MCF 10A (cell line): ENCODE measurements at regions of chr3 and their contacts with region 1.

Region 1: DNA sequence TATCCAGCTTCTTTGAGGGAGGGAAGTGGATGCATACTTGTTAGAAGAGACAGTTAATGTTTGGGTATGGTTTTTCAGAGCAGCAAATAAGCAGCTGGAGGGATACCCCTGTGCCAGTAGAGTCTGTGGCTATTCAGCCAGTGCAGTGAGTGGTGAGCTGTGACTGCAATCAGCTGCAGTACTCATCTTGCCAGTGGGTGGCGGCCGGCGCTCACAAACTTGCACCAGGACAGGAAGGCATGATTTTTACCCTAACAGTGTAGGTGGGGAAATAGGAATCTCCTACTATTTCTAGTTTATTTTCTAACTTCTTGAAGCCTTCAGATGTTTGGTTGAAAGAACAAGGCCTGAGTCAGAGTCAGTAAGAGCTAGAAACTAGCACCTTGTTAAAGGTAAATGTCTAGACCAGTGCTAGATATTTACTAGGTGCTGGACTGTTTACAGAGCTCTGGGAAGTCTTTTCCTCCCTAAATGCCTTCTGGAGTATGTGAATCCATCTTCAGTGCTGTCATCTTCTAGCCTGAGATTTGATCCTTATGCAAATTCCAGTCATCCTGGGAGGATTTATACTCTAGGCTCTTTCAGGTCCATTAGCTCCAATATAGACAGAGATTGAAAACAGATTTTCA is 23.6 kb downstream of the TIMP4 start:
- DNase-seq: peak; percentile 71
- H3K4me3 Mint-ChIP-seq: no peak overlapping the region
- H3K27ac Mint-ChIP-seq: no peak overlapping the region
- H3K4me1 Mint-ChIP-seq: peaks cover 8% of the 10 kb centered on the region
- H3K27me3 Mint-ChIP-seq: peaks cover 47% of the 10 kb centered on the region
- CTCF ChIP-seq: peak; percentile 93

Region 2: GRCh38 chr3:11379233-11379823 is 755.8 kb before region 1 on chr3:
- CTCF ChIA-PET with region 1: no interaction called
- POLR2A ChIA-PET with region 1: no interaction called
- intact Hi-C with region 1: no loop called
- DNase-seq: peak; percentile 59
- H3K4me3 Mint-ChIP-seq: no peak overlapping the region
- H3K27ac Mint-ChIP-seq: peak overlapping the region; percentile 79
- H3K4me1 Mint-ChIP-seq: peaks cover 17% of the 10 kb centered on the region
- H3K27me3 Mint-ChIP-seq: no peaks in the 10 kb centered on the region
- CTCF ChIP-seq: peak; percentile 72

Region 3: GRCh38 chr3:12158387-12159226 is 23.5 kb after region 1 on chr3 and contains the start of gene TIMP4:
- CTCF ChIA-PET with region 1: interaction called, 21 read pairs
- POLR2A ChIA-PET with region 1: no interaction called
- intact Hi-C with region 1: no loop called
- DNase-seq: no peak
- H3K4me3 Mint-ChIP-seq: no peak within 1 kb of the TSS
- H3K27ac Mint-ChIP-seq: no peak within 1 kb of the TSS
- H3K4me1 Mint-ChIP-seq: peaks cover 12% of the 10 kb centered on the region
- H3K27me3 Mint-ChIP-seq: no peaks in the 10 kb centered on the region
- CTCF ChIP-seq: no peak
- total RNA-seq, gene TIMP4: not detected in 2 replicates

Region 4: GRCh38 chr3:12187448-12188327 is 52.5 kb after region 1 on chr3:
- CTCF ChIA-PET with region 1: interaction called, 18 read pairs
- POLR2A ChIA-PET with region 1: no interaction called
- intact Hi-C with region 1: no loop called
- DNase-seq: peak; percentile 60
- H3K4me3 Mint-ChIP-seq: peak overlapping the region; percentile 33
- H3K27ac Mint-ChIP-seq: peak overlapping the region; percentile 96
- H3K4me1 Mint-ChIP-seq: peaks cover 31% of the 10 kb centered on the region
- H3K27me3 Mint-ChIP-seq: no peaks in the 10 kb centered on the region
- CTCF ChIP-seq: no peak

Region 5: GRCh38 chr3:12287727-12288191 is 152.6 kb after region 1 on chr3:
- CTCF ChIA-PET with region 1: interaction called, 3 read pairs
- POLR2A ChIA-PET with region 1: no interaction called
- intact Hi-C with region 1: loop called (anchors 1 kb)
- DNase-seq: peak; percentile 42
- H3K4me3 Mint-ChIP-seq: peak overlapping the region; percentile 70
- H3K27ac Mint-ChIP-seq: no peak overlapping the region
- H3K4me1 Mint-ChIP-seq: peaks cover 5% of the 10 kb centered on the region
- H3K27me3 Mint-ChIP-seq: no peaks in the 10 kb centered on the region
- CTCF ChIP-seq: no peak

Region 6: GRCh38 chr3:12471243-12471651 is 336.1 kb after region 1 on chr3:
- CTCF ChIA-PET with region 1: interaction called, 246 read pairs
- POLR2A ChIA-PET with region 1: no interaction called
- intact Hi-C with region 1: no loop called
- DNase-seq: peak; percentile 89
- H3K4me3 Mint-ChIP-seq: peak overlapping the region; percentile 18
- H3K27ac Mint-ChIP-seq: peak overlapping the region; percentile 20
- H3K4me1 Mint-ChIP-seq: peaks cover 16% of the 10 kb centered on the region
- H3K27me3 Mint-ChIP-seq: no peaks in the 10 kb centered on the region
- CTCF ChIP-seq: no peak

Region 7: GRCh38 chr3:12706504-12707253 is 571.5 kb after region 1 on chr3:
- CTCF ChIA-PET with region 1: interaction called, 3 read pairs
- POLR2A ChIA-PET with region 1: no interaction called
- intact Hi-C with region 1: loop called (anchors 10 kb)
- DNase-seq: peak; percentile 91
- H3K4me3 Mint-ChIP-seq: no peak overlapping the region
- H3K27ac Mint-ChIP-seq: no peak overlapping the region
- H3K4me1 Mint-ChIP-seq: peaks cover 42% of the 10 kb centered on the region
- H3K27me3 Mint-ChIP-seq: no peaks in the 10 kb centered on the region
- CTCF ChIP-seq: peak; percentile 59